ENCODE measurements at regions of chr9 and their contacts with region 1.

Region 1: DNA sequence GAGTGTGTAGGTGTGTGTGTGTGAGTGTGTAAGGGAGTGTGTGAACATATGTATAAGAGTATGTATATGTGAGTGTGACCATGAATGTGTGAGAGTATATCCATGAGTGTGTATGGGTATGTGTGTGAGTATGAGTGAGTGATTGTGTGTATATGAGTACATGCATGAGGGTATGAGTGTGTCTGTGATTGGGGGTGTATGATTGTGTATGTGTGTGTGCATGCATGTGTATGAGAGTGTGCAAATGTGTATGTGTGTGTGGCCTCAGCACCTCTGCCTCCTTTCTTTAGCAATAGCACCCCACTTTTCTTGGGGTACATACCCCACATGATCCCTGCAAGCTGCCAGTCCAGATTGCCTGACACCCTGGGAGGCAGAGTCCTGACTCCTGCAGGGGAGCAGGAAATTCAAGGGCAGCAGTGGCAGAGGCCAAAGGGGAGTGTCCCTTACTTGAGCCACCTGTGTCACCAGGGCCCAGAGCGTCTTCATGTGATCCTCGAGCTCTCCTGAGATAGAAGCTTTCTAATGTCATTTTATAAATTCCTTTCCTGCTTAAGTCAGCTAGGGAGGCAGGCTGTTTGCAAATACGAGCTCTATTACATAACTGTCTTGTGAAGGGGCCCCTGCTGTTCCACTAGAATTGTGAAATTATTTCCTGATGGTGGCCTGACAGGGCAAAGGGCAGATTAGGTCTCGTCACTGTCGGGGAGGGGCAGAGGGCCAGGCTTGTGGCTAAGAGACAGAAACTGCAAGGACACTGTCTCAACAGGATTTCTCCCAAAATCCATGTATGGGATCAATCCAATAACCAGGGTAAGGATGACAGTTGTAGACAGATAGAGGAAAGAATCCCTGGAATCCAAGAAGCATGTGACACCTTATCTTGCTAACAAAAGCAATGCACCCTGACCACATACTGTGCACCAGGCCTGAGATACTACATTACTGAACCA is 389.1 kb downstream of the GADD45G start:
- DNase-seq: no peak
- H3K4me3 ChIP-seq: no peak overlapping the region
- CTCF ChIP-seq: no peak

Region 2: DNA sequence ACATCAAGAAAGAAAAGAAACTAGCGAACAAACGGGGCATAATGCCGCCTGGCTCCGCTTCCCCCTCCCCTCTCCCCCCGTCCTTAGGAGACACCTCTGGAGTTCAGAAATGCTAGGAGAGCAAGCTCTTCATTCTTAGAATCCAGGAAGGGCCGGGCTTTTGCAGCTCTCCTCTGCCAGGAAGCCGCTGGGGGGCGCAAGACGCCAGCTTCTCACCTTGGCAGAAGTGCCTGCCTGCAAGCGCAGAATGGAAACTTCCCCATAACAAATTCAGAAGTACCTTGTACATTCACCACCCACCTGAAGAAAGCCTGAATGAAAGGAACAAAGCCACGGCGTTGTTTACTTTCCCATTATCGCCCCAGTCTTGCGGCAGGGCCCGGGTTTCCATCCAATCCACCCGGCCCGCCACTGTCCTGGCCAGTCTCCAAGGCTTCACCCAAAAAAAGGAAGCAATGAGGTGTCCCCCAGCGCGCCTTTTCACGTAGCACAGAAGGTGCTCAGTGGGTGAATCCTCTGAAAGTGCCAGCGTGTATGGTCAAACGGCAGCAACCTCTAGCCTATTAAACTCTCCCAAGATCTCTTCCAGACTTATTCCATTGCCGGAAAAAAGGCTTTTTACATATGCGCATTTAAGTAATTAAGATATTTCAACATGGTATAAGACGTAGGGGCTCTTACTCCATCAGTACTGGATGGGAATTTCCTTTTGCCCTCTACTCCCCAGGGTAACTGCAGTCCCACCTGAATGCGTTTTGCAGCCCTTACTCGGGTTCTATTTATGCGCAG is 390.8 kb before region 1 on chr9:
- in situ Hi-C with region 1: loop called (anchors 5 kb)
- DNase-seq: peak; percentile 69
- H3K4me3 ChIP-seq: peak overlapping the region; percentile 47
- CTCF ChIP-seq: peak; percentile 93

Region 3: DNA sequence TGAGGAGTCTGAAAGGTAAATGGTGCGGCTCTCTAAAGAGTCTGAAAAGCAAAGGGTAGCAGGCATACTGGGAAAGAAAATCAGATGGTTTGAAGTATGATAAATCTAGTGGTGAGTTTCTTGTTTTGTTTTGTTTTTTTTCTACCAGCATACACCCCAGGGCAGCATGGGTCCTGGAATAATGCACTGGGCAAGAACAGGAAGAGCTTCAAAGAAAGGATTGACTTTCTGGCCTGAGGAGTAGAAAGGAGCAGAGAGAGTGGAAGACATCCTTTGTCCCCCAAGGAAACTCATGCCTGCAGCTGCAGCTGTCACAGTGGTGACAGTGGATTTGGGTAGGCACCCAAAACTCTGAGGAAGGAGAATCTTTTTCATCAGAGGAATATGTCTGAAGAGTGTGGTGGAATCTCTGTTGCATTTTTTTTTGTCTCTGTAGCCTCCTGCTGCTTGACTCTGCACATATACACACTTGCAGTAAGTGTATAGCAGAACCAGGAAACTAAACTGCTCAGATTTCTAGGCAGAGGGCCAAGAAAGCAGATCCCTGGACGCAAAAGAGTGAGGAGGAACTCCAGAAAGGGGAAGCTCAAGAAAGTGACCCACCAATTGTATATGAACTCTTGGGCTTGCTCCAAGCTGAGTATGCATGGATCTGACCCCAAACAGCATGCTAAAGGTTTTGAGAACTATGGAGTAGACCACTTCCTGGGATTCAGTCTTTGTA is 207.5 kb before region 1 on chr9:
- in situ Hi-C with region 1: no loop called
- DNase-seq: no peak
- H3K4me3 ChIP-seq: no peak overlapping the region
- CTCF ChIP-seq: no peak

Region 4: GRCh38 chr9:89891591-89892304 is 102.2 kb before region 1 on chr9:
- in situ Hi-C with region 1: loop called (anchors 5 kb)
- DNase-seq: peak; percentile 39
- H3K4me3 ChIP-seq: no peak overlapping the region
- CTCF ChIP-seq: no peak

Region 5: GRCh38 chr9:89929673-89930480 is 64.1 kb before region 1 on chr9:
- in situ Hi-C with region 1: loop called (anchors 5 kb)
- DNase-seq: no peak
- H3K4me3 ChIP-seq: no peak overlapping the region
- CTCF ChIP-seq: no peak

Region 6: GRCh38 chr9:90099262-90099963 is 105.5 kb after region 1 on chr9:
- in situ Hi-C with region 1: no loop called
- DNase-seq: no peak
- H3K4me3 ChIP-seq: no peak overlapping the region
- CTCF ChIP-seq: peak; percentile 55

Measured in astrocyte of the cerebellum (primary cell).